ENCODE measurements at regions of chr3 and their contacts with region 1.

Region 1: DNA sequence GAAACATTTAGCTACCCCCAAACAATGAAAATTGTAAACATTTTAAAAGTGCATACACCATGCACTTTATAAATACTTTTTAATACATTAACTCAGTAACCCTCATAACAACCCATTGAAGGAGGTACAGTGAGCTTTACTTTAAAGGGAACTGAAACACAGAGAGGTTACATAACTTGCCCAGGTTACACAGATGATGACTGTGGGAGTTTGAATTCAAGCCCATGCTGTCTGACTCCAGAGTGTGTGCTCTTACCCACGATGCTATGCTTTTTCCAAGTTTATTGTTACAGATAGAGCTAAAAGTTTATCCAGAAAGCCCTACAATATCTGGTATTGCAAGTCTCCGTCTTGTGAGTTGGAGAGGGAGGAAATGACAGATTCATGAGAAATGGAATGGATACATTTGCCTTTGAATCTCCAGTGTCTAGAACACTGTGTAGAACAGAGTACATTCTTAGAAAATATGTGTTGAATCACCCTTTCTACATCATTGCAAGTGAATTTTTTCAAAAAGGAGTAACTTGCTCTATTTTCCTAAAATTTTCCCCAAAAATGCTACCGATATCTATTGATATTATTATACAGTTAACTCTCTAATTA is 428.3 kb downstream of the NAALADL2 start:
- DNase-seq: no peak
- ATAC-seq: no peak
- H3K4me3 ChIP-seq: no peak overlapping the region
- H3K27ac ChIP-seq: no peak overlapping the region
- H3K4me1 ChIP-seq: no peaks in the 10 kb centered on the region
- H3K27me3 ChIP-seq: no peaks in the 10 kb centered on the region
- CTCF ChIP-seq: no peak
- EP300 ChIP-seq: no peak
- POLR2A ChIP-seq: no peak
- RAD21 ChIP-seq: no peak

Region 2: GRCh38 chr3:173340626-173341025 is 1946.8 kb before region 1 on chr3:
- CTCF ChIA-PET with region 1: no interaction called
- POLR2A ChIA-PET with region 1: no interaction called
- in situ Hi-C with region 1: loop called (anchors 25 kb)
- intact Hi-C with region 1: no loop called
- DNase-seq: no peak
- ATAC-seq: no peak
- H3K4me3 ChIP-seq: no peak overlapping the region
- H3K27ac ChIP-seq: no peak overlapping the region
- H3K4me1 ChIP-seq: no peaks in the 10 kb centered on the region
- H3K27me3 ChIP-seq: no peaks in the 10 kb centered on the region
- CTCF ChIP-seq: no peak
- EP300 ChIP-seq: no peak
- POLR2A ChIP-seq: no peak
- RAD21 ChIP-seq: no peak

Region 3: GRCh38 chr3:175325440-175325839 is 38.0 kb after region 1 on chr3:
- CTCF ChIA-PET with region 1: no interaction called
- POLR2A ChIA-PET with region 1: no interaction called
- in situ Hi-C with region 1: no loop called
- intact Hi-C with region 1: no loop called
- DNase-seq: no peak
- ATAC-seq: no peak
- H3K4me3 ChIP-seq: no peak overlapping the region
- H3K27ac ChIP-seq: no peak overlapping the region
- H3K4me1 ChIP-seq: no peaks in the 10 kb centered on the region
- H3K27me3 ChIP-seq: no peaks in the 10 kb centered on the region
- CTCF ChIP-seq: no peak
- EP300 ChIP-seq: no peak
- POLR2A ChIP-seq: no peak
- RAD21 ChIP-seq: no peak